PC-9 (cell line): ENCODE measurements at regions of chr2 and their contacts with region 1.

Region 1: DNA sequence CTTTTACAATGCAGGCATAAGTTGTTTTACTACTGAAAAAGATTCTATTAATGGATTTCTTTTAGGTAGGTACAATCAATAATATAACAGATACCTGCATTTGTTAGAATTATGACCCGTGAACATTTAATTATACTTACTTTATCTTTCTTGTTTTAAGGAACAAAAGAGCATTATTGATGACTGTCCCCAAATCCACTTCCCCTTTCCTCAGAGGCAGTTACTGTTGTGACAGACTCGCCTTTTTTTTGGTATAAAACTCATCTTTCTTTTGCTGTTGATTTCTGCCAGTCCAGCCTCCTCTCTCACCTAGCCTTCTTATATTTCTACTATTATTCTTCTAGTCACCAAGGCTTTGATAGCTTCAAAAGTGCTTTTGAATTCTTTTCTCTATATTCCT is 12.1 kb downstream of the ACTR3 start:
- DNase-seq: no peak
- H3K4me3 ChIP-seq: no peak overlapping the region
- H3K27ac ChIP-seq: no peak overlapping the region
- H3K4me1 ChIP-seq: no peaks in the 10 kb centered on the region
- H3K27me3 ChIP-seq: no peaks in the 10 kb centered on the region
- CTCF ChIP-seq: no peak

Region 2: DNA sequence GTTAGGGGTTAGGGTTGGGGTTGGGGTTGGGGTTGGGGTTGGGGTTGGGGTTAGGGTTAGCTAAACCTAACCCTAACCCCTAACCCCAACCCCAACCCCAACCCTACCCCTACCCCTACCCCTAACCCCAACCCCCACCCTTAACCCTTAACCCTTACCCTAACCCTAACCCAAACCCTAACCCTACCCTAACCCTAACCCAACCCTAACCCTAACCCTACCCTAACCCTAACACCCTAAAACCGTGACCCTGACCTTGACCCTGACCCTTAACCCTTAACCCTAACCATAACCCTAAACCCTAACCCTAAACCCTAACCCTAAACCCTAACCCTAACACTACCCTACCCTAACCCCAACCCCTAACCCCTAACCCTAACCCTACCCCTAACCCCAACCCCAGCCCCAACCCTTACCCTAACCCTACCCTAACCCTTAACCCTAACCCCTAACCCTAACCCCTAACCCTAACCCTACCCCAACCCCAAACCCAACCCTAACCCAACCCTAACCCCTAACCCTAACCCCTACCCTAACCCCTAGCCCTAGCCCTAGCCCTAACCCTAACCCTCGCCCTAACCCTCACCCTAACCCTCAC is 299.0 kb before region 1 on chr2:
- CTCF ChIA-PET with region 1: no interaction called
- POLR2A ChIA-PET with region 1: interaction called, 19 read pairs
- intact Hi-C with region 1: no loop called
- DNase-seq: no peak
- H3K4me3 ChIP-seq: peak overlapping the region; percentile 33; the same call in 1 of the 2 replicates
- H3K27ac ChIP-seq: no peak overlapping the region
- H3K4me1 ChIP-seq: no peaks in the 10 kb centered on the region
- H3K27me3 ChIP-seq: no peaks in the 10 kb centered on the region
- CTCF ChIP-seq: no peak